H1 (cell line): ENCODE measurements at regions of chr4 and their contacts with region 1.

Region 1: GRCh38 chr4:78056265-78057129 is 626 bp upstream of the FRAS1 start:
- DNase-seq: peak in 1 of 2 experiments; percentile 84
- H3K4me3 ChIP-seq: peak overlapping the region; percentile 90 to 100 (median 96)
- H3K27ac ChIP-seq: peak overlapping the region; percentile 70
- H3K4me1 ChIP-seq: peaks cover 3 to 10% (median 5%) of the 10 kb centered on the region in 4 experiments; a peak in 4 of 7 replicates
- H3K27me3 ChIP-seq: no peaks in the 10 kb centered on the region
- CTCF ChIP-seq: peak; percentile 30 to 42 (median 40)
- EP300 ChIP-seq: no peak
- POLR2A ChIP-seq: peak; percentile 70 to 93
- RAD21 ChIP-seq: peak; percentile 18 to 46; a peak in 2 of 4 replicates

Region 2: GRCh38 chr4:77893451-77893850 is 163.0 kb before region 1 on chr4:
- CTCF ChIA-PET with region 1: no interaction called
- POLR2A ChIA-PET with region 1: no interaction called
- DNase-seq: no peak
- H3K4me3 ChIP-seq: no peak overlapping the region
- H3K27ac ChIP-seq: no peak overlapping the region
- H3K4me1 ChIP-seq: no peaks in the 10 kb centered on the region
- H3K27me3 ChIP-seq: no peaks in the 10 kb centered on the region
- CTCF ChIP-seq: no peak
- EP300 ChIP-seq: no peak
- POLR2A ChIP-seq: no peak
- RAD21 ChIP-seq: no peak

Region 3: DNA sequence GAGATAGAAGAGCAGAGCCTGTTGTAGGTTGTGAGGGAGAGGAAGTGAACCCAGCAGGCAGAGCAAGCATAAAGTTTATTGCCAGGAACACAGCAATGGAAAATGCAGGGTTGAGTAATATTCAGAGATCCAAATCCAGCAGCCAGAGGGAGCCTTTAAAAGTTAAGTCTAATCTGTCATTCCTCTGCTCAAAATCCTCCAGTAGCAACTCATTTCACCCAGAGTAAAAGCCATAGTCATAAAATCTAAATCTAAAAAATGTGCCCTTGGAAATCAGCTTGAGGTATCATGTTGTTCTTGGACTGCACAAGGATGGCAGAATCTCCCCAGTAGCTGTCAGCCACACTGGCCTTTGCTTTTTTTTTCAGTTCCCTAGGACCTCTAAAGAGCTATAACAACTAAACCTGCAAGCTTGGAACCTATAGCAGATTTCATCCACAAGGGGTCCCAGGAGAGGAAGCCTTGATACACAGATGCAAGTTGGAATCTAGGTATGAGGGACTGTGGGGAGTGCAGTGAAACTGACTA is 62.2 kb before region 1 on chr4:
- CTCF ChIA-PET with region 1: interaction called, 22 read pairs
- POLR2A ChIA-PET with region 1: interaction called, 10 read pairs
- DNase-seq: peak; percentile 39 to 57
- H3K4me3 ChIP-seq: no peak overlapping the region
- H3K27ac ChIP-seq: no peak overlapping the region
- H3K4me1 ChIP-seq: peaks cover 0 to 21% (median 6%) of the 10 kb centered on the region in 4 experiments; a peak in 4 of 7 replicates
- H3K27me3 ChIP-seq: no peaks in the 10 kb centered on the region
- CTCF ChIP-seq: peak; percentile 7 to 81 (median 79)
- EP300 ChIP-seq: no peak
- POLR2A ChIP-seq: no peak
- RAD21 ChIP-seq: peak; percentile 79 to 85

Region 4: GRCh38 chr4:78069859-78070258 is 13.4 kb after region 1 on chr4:
- CTCF ChIA-PET with region 1: interaction called, 20 read pairs
- POLR2A ChIA-PET with region 1: interaction called, 22 read pairs
- DNase-seq: no peak
- H3K4me3 ChIP-seq: no peak overlapping the region
- H3K27ac ChIP-seq: no peak overlapping the region
- H3K4me1 ChIP-seq: peaks cover 4 to 24% (median 12%) of the 10 kb centered on the region in 4 experiments; a peak in 5 of 7 replicates
- H3K27me3 ChIP-seq: no peaks in the 10 kb centered on the region
- CTCF ChIP-seq: no peak
- EP300 ChIP-seq: no peak
- POLR2A ChIP-seq: no peak
- RAD21 ChIP-seq: no peak

Region 5: GRCh38 chr4:78092850-78093249 is 36.4 kb after region 1 on chr4:
- CTCF ChIA-PET with region 1: interaction called, 36 read pairs
- POLR2A ChIA-PET with region 1: interaction called, 30 read pairs
- DNase-seq: peak in 1 of 2 experiments; percentile 50
- H3K4me3 ChIP-seq: peak overlapping the region in 1 of 4 experiments; percentile 35; a peak in 2 of 8 replicates
- H3K27ac ChIP-seq: peak overlapping the region; percentile 81; the same call in 1 of the 2 replicates
- H3K4me1 ChIP-seq: peaks cover 5 to 14% (median 6%) of the 10 kb centered on the region in 4 experiments; a peak in 6 of 7 replicates
- H3K27me3 ChIP-seq: no peaks in the 10 kb centered on the region
- CTCF ChIP-seq: no peak
- EP300 ChIP-seq: peak in 1 of 2 experiments; percentile 36; a peak in 1 of 3 replicates
- POLR2A ChIP-seq: no peak
- RAD21 ChIP-seq: no peak

Region 6: GRCh38 chr4:78310022-78310741 is 253.7 kb after region 1 on chr4:
- CTCF ChIA-PET with region 1: interaction called, 14 read pairs
- POLR2A ChIA-PET with region 1: interaction called, 14 read pairs
- DNase-seq: no peak
- H3K4me3 ChIP-seq: no peak overlapping the region
- H3K27ac ChIP-seq: no peak overlapping the region
- H3K4me1 ChIP-seq: peaks cover 3 to 22% (median 10%) of the 10 kb centered on the region in 4 experiments; a peak in 6 of 7 replicates
- H3K27me3 ChIP-seq: no peaks in the 10 kb centered on the region
- CTCF ChIP-seq: no peak
- EP300 ChIP-seq: no peak
- POLR2A ChIP-seq: no peak
- RAD21 ChIP-seq: no peak